Keratinocyte (primary cell): ENCODE measurements at regions of chr2 and their contacts with region 1.

Region 1: DNA sequence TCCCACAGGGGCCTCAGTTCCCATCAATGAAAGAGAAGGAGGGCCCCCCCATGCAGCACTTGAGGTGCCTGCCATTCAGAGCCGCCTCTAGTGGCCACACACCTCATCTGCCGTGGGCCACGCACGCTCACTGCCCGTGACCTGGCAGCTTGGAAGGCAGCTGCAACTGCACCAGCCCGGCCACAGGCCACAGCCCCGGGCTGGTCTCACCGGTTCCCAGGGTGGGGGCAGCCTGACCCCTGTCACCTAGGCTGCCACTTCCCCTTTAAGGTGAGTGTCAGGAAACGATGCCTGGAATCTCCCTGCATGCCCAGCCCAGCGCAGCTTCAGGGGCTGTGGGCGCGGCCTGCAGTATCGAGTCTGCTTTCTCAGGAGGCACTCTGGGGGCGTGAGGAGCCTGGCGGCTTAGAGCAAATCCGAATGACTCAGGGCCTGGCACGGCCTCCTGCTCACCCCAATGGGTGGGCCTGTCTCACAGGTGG is 2.6 kb downstream of the MAB21L4 start:
- DNase-seq: no peak
- H3K4me3 ChIP-seq: no peak overlapping the region
- H3K27ac ChIP-seq: no peak overlapping the region
- H3K4me1 ChIP-seq: peaks cover 20% of the 10 kb centered on the region
- H3K27me3 ChIP-seq: peaks cover 19% of the 10 kb centered on the region
- CTCF ChIP-seq: peak; percentile 23 to 35 (median 29)

Region 2: GRCh38 chr2:240846873-240847598 is 46.4 kb before region 1 on chr2:
- dilution Hi-C with region 1: loop called (anchors 5 kb)
- DNase-seq: no peak
- H3K4me3 ChIP-seq: no peak overlapping the region
- H3K27ac ChIP-seq: no peak overlapping the region
- H3K4me1 ChIP-seq: no peaks in the 10 kb centered on the region
- H3K27me3 ChIP-seq: no peaks in the 10 kb centered on the region
- CTCF ChIP-seq: no peak